K562 (cell line): ENCODE measurements at regions of chr10 and their contacts with region 1.

Region 1: DNA sequence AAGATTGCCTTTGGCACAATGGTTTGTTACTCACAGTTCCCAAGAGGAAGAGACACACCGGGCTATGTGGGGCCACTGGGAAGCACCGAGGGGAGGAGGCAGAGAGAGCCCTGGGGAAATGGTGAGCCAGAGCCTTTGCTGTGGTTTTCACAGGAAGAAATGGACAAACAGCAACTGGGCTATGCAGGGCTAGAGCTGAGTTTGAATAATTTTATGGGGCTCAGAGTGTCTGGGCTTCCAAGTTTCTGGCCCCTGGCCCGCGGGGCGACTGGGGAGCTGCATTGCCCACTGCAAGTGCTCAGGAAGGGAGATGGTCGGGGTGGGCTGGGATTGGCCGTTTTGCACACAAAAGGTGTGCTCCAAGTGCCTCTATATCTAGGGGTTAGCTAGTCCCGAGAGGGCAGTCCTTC is 92.6 kb downstream of the CHST15 start:
- DNase-seq: no peak
- ATAC-seq: no peak
- H3K4me3 ChIP-seq: no peak overlapping the region
- H3K27ac ChIP-seq: no peak overlapping the region
- H3K4me1 ChIP-seq: no peaks in the 10 kb centered on the region; a peak in 1 of 5 replicates
- H3K27me3 ChIP-seq: peaks cover 0 to 8% of the 10 kb centered on the region in 2 experiments; a peak in 1 of 5 replicates
- CTCF ChIP-seq: no peak
- EP300 ChIP-seq: no peak
- POLR2A ChIP-seq: no peak
- RAD21 ChIP-seq: no peak

Region 2: DNA sequence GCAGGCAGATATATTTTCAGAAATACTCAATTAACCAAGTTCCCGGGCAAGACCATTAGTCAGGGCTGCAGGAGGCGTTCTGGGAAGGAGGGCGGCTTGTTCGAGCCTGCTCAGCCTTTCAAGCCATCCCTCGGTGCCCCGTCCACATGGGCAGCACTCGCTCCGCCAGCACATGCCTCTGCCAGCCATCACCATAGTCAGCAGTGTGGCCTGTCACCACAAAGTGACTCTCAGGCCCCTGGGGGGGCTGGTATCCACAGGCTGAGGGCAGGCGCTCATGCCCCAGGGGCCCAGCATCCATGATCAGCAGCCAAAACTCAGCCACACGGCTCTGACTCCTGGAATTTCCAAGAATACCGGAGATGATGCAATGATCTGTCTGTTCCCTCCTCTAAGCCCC is 10.7 kb after region 1 on chr10:
- CTCF ChIA-PET with region 1: no interaction called
- POLR2A ChIA-PET with region 1: no interaction called
- in situ Hi-C with region 1: no loop called
- intact Hi-C with region 1: no loop called
- DNase-seq: no peak
- ATAC-seq: no peak
- H3K4me3 ChIP-seq: no peak overlapping the region
- H3K27ac ChIP-seq: no peak overlapping the region
- H3K4me1 ChIP-seq: no peaks in the 10 kb centered on the region
- H3K27me3 ChIP-seq: peaks cover 2 to 37% of the 10 kb centered on the region in 2 experiments; a peak in 3 of 5 replicates
- CTCF ChIP-seq: no peak
- EP300 ChIP-seq: no peak
- POLR2A ChIP-seq: no peak
- RAD21 ChIP-seq: no peak

Region 3: GRCh38 chr10:124381011-124381611 is 380.3 kb after region 1 on chr10:
- CTCF ChIA-PET with region 1: no interaction called
- POLR2A ChIA-PET with region 1: no interaction called
- in situ Hi-C with region 1: loop called (anchors 5 kb)
- intact Hi-C with region 1: no loop called
- DNase-seq: no peak
- ATAC-seq: no peak
- H3K4me3 ChIP-seq: no peak overlapping the region
- H3K27ac ChIP-seq: no peak overlapping the region
- H3K4me1 ChIP-seq: no peaks in the 10 kb centered on the region; a peak in 1 of 5 replicates
- H3K27me3 ChIP-seq: peaks cover 10 to 64% of the 10 kb centered on the region in 2 experiments; a peak in 4 of 5 replicates
- CTCF ChIP-seq: no peak
- EP300 ChIP-seq: no peak
- POLR2A ChIP-seq: no peak
- RAD21 ChIP-seq: no peak

Region 4: DNA sequence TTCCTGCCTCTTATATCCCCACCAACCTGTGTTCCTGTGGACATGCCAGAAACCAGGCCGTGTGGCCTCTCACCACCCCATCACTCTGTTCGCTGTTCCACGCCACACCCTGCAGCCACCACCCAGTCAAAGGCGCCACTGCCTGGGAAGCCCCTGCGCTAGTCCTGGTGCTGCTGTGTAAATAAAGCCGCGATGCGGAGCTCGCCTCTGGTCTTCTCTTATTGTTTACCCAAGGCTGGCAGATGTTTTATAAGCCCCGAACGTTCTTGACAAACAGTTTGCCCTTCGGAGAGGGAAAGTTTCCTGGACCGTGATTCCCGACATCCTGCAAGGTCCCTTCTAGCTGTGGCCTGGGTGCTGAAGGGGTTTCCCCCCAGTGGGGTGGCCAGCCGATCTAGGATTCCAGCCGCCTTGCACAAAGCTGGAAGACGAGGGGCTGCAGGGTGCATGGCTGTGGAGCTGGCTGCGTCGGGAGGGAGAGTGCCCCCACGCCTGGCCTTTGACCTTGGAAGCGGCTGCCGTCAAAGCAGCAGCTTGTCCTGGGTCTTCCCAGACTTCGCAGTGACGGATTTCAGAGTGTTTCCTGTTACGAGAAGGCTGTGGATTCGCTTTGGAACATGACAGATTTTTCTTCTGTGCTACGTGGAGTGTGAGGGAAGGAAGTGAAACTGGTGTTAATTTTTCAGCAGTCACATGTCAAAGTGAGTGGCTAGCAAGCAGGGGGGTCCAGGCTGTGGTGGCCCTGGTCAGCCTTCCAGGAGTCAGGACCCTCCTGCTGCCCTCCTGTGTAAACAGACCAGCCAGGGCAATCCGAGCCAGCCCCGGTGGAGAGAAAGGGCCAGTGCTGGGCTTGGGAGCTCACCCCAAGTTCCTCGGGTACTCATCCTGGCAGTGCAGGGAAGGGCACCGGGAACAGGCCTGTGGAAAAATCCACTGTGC is 522.4 kb after region 1 on chr10:
- CTCF ChIA-PET with region 1: no interaction called
- POLR2A ChIA-PET with region 1: no interaction called
- in situ Hi-C with region 1: loop called (anchors 25 kb)
- intact Hi-C with region 1: no loop called
- DNase-seq: no peak
- ATAC-seq: peak; percentile 34; the same call in 1 of the 3 replicates
- H3K4me3 ChIP-seq: no peak overlapping the region
- H3K27ac ChIP-seq: no peak overlapping the region
- H3K4me1 ChIP-seq: peaks cover 0 to 45% of the 10 kb centered on the region in 2 experiments; a peak in 2 of 5 replicates
- H3K27me3 ChIP-seq: peaks cover 0 to 6% of the 10 kb centered on the region in 2 experiments; a peak in 1 of 5 replicates
- CTCF ChIP-seq: no peak
- EP300 ChIP-seq: no peak
- POLR2A ChIP-seq: no peak
- RAD21 ChIP-seq: no peak